T-cell (primary cell): ENCODE measurements at regions of chr7 and their contacts with region 1.

Region 1: DNA sequence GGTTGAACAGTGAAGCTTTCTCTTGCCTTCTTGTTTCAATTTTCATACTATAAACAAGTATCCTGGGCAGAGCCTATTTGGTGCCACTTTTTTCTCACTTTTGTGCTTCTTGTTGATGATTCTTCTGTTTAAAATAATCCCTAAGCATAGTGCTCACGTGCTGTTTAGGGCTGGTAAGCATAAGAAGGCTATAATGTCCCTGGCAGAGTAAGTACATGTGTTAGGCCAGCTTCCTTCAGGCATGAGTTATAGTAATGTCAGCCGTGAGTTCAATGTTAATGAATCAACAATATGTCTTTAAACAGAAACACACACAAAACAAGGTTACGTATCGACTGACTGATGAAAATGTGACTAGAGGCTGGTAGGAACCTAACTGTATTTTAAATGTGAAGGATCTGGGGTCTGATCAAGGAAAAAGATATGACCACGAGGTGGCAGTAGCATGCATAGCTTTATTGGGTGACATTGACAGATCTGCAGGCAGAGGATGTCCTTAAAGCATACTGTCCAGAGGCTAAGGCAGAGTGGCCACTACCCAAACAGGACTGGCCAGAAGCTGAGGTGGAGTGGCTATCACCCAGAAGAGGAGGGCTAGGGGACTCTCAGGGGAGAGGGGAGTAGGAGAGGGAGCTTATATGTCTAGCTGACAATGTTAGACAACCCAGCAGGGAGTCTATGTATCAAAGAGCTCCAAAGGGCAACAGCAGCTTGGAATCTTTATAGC is 113.7 kb downstream of the BRAF start:
- DNase-seq: peak in 34 of 35 experiments; percentile 4 to 83 (median 44)
- ATAC-seq: peak; percentile 70 to 90 (median 76)
- H3K4me3 ChIP-seq: no peak overlapping the region
- H3K4me3 Mint-ChIP-seq: no peak overlapping the region
- H3K27ac ChIP-seq: no peak overlapping the region
- H3K27ac Mint-ChIP-seq: peak overlapping the region in 1 of 2 donors; percentile 7
- H3K4me1 ChIP-seq: no peaks in the 10 kb centered on the region
- H3K4me1 Mint-ChIP-seq: peaks cover 3 to 7% (median 6%) of the 10 kb centered on the region in 3 donors
- H3K27me3 ChIP-seq: no peaks in the 10 kb centered on the region
- H3K27me3 Mint-ChIP-seq: no peaks in the 10 kb centered on the region

Region 2: GRCh38 chr7:140564643-140565042 is 246.3 kb before region 1 on chr7:
- CTCF ChIA-PET with region 1: no interaction called
- POLR2A ChIA-PET with region 1: no interaction called
- DNase-seq: no peak
- ATAC-seq: no peak
- H3K4me3 ChIP-seq: no peak overlapping the region
- H3K4me3 Mint-ChIP-seq: no peak overlapping the region
- H3K27ac ChIP-seq: no peak overlapping the region
- H3K27ac Mint-ChIP-seq: no peak overlapping the region
- H3K4me1 ChIP-seq: no peaks in the 10 kb centered on the region
- H3K4me1 Mint-ChIP-seq: no peaks in the 10 kb centered on the region
- H3K27me3 ChIP-seq: peaks cover 0 to 4% of the 10 kb centered on the region in 2 experiments
- H3K27me3 Mint-ChIP-seq: peaks cover 0 to 3% of the 10 kb centered on the region in 2 donors

Region 3: GRCh38 chr7:140754506-140754905 is 56.5 kb before region 1 on chr7:
- CTCF ChIA-PET with region 1: no interaction called
- POLR2A ChIA-PET with region 1: no interaction called
- DNase-seq: no peak
- ATAC-seq: no peak
- H3K4me3 ChIP-seq: no peak overlapping the region
- H3K4me3 Mint-ChIP-seq: no peak overlapping the region
- H3K27ac ChIP-seq: no peak overlapping the region
- H3K27ac Mint-ChIP-seq: no peak overlapping the region
- H3K4me1 ChIP-seq: no peaks in the 10 kb centered on the region
- H3K4me1 Mint-ChIP-seq: no peaks in the 10 kb centered on the region
- H3K27me3 ChIP-seq: no peaks in the 10 kb centered on the region
- H3K27me3 Mint-ChIP-seq: no peaks in the 10 kb centered on the region

Region 4: DNA sequence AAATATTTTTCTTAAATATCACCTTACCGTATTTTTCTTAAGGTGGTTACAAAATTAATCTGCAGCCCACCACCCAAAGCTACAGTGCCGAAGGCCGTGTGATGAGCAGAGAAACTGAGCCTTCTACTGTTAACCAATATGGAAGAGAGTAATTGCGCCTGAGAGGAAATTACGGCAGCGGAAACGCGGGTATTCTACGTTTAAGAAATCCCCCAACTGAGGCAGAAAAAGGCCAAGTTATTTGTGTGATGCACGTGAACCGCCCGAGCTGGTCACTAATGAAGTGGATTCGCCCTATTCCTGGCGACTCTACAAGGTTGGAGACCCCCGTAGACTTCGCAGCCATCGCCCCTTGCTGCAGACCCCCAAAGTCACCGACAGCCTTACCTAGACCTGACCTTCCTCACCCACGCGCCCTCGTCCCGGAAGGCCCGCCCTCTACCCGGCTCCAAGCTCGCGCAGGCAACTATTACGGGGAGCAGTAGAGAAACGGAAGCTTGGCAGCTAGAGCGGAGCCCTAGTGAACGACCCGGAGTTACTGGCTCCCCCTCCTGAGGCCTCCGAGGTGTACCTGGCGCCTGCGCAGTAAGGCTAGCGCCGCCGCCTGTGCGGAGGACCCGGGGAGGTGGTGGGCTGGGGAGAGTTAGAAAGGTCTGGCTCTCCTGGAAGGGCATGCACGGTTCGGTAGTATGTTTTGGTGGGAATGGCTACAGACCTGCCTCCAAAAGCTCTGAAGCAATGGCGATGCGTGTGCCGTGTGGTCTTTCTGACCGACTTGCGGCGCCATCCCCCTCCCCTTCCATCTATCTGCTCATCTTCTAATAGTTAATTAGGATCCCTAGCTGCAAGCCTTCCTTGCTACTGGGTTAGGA is 203.8 kb after region 1 on chr7 and contains the start of gene MRPS33:
- CTCF ChIA-PET with region 1: interaction called, 29 to 107 read pairs
- POLR2A ChIA-PET with region 1: interaction called in 1 of 2 experiments, 4 read pairs
- DNase-seq: peak; percentile 87 to 97 (median 94)
- ATAC-seq: peak; percentile 95 to 99 (median 98)
- H3K4me3 ChIP-seq: peak within 1 kb of the TSS; percentile 66 to 85
- H3K4me3 Mint-ChIP-seq: peak within 1 kb of the TSS; percentile 82 to 98 (median 96)
- H3K27ac ChIP-seq: peak within 1 kb of the TSS; percentile 98
- H3K27ac Mint-ChIP-seq: peak within 1 kb of the TSS; percentile 98 to 100
- H3K4me1 ChIP-seq: peaks cover 10 to 13% of the 10 kb centered on the region in 2 experiments
- H3K4me1 Mint-ChIP-seq: peaks cover 36 to 42% (median 39%) of the 10 kb centered on the region in 3 donors
- H3K27me3 ChIP-seq: peaks cover 0 to 3% of the 10 kb centered on the region in 2 experiments
- H3K27me3 Mint-ChIP-seq: peaks cover 5 to 13% of the 10 kb centered on the region in 2 donors
- total RNA-seq, gene MRPS33: 24.2 to 45.5 (median 38.6) TPM